MCF 10A (cell line): ENCODE measurements at regions of chr11 and their contacts with region 1.

Region 1: GRCh38 chr11:15969281-15969680 is 387.1 kb downstream of the SOX6 start:
- DNase-seq: peak; percentile 83
- H3K4me3 Mint-ChIP-seq: peak overlapping the region; percentile 30
- H3K27ac Mint-ChIP-seq: peak overlapping the region; percentile 91
- H3K4me1 Mint-ChIP-seq: peaks cover 45% of the 10 kb centered on the region
- H3K27me3 Mint-ChIP-seq: no peaks in the 10 kb centered on the region
- CTCF ChIP-seq: no peak

Region 2: GRCh38 chr11:15835788-15836411 is 133.4 kb before region 1 on chr11:
- CTCF ChIA-PET with region 1: no interaction called
- POLR2A ChIA-PET with region 1: no interaction called
- intact Hi-C with region 1: no loop called
- DNase-seq: no peak
- H3K4me3 Mint-ChIP-seq: no peak overlapping the region
- H3K27ac Mint-ChIP-seq: no peak overlapping the region
- H3K4me1 Mint-ChIP-seq: peaks cover 6% of the 10 kb centered on the region
- H3K27me3 Mint-ChIP-seq: no peaks in the 10 kb centered on the region
- CTCF ChIP-seq: no peak

Region 3: DNA sequence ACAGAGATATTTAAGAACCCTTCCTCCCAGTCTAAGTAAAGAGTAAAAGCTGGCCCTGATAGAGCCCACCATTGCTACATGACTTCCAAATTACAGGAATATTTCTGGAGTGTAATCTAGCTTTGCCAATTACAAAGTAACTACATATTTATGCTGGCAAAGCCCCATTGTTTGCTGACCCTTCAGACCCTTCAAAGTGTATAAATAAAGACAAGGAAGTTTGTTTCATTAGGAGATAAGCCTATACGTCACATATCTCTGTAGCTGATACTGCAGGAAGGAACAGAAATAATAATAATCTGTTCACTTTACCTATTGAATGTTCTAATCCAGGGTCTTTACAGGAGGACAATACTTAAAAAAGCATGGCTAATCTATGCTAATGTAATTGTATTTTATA is 12.0 kb after region 1 on chr11:
- CTCF ChIA-PET with region 1: interaction called, 3 read pairs
- POLR2A ChIA-PET with region 1: interaction called, 20 read pairs
- intact Hi-C with region 1: no loop called
- DNase-seq: no peak
- H3K4me3 Mint-ChIP-seq: no peak overlapping the region
- H3K27ac Mint-ChIP-seq: no peak overlapping the region
- H3K4me1 Mint-ChIP-seq: no peaks in the 10 kb centered on the region
- H3K27me3 Mint-ChIP-seq: no peaks in the 10 kb centered on the region
- CTCF ChIP-seq: no peak

Region 4: GRCh38 chr11:16001899-16002426 is 32.7 kb after region 1 on chr11:
- CTCF ChIA-PET with region 1: interaction called, 3 read pairs
- POLR2A ChIA-PET with region 1: interaction called, 19 read pairs
- intact Hi-C with region 1: loop called (anchors 1 kb)
- DNase-seq: peak; percentile 91
- H3K4me3 Mint-ChIP-seq: peak overlapping the region; percentile 54
- H3K27ac Mint-ChIP-seq: peak overlapping the region; percentile 83
- H3K4me1 Mint-ChIP-seq: peaks cover 21% of the 10 kb centered on the region
- H3K27me3 Mint-ChIP-seq: no peaks in the 10 kb centered on the region
- CTCF ChIP-seq: no peak

Region 5: DNA sequence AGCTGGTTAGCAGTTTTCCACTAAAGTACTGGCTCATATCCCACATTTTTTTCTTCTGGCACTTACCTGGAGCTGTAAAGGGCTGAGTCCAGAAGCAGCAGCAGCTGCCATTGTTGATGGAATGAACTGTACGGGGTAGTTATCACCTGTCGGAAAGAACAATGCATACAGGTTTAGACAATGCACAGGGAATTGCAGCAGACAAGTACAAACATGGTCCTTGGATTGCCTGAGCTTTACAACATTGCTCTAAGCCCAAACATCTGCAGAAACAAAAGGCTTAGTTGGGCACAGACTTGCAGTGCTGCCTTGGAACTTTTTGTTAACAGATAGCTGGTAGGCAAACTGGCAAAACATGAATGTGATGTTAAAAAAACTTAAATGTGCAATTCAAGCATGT is 128.3 kb after region 1 on chr11:
- CTCF ChIA-PET with region 1: interaction called, 6 read pairs
- POLR2A ChIA-PET with region 1: interaction called, 66 read pairs
- intact Hi-C with region 1: no loop called
- DNase-seq: peak; percentile 80
- H3K4me3 Mint-ChIP-seq: no peak overlapping the region
- H3K27ac Mint-ChIP-seq: no peak overlapping the region
- H3K4me1 Mint-ChIP-seq: peaks cover 31% of the 10 kb centered on the region
- H3K27me3 Mint-ChIP-seq: no peaks in the 10 kb centered on the region
- CTCF ChIP-seq: no peak

Region 6: GRCh38 chr11:16280256-16280682 is 311.0 kb after region 1 on chr11:
- CTCF ChIA-PET with region 1: no interaction called
- POLR2A ChIA-PET with region 1: interaction called, 5 read pairs
- intact Hi-C with region 1: loop called (anchors 10 kb)
- DNase-seq: peak; percentile 95
- H3K4me3 Mint-ChIP-seq: peak overlapping the region; percentile 70
- H3K27ac Mint-ChIP-seq: peak overlapping the region; percentile 78
- H3K4me1 Mint-ChIP-seq: peaks cover 22% of the 10 kb centered on the region
- H3K27me3 Mint-ChIP-seq: no peaks in the 10 kb centered on the region
- CTCF ChIP-seq: no peak